Mammary epithelial cell (primary cell): ENCODE measurements at regions of chr2 and their contacts with region 1.

Region 1: GRCh38 chr2:232927793-232928550 is 57.9 kb downstream of the SNORC start:
- DNase-seq: no peak
- H3K4me3 ChIP-seq: no peak overlapping the region
- H3K27ac ChIP-seq: no peak overlapping the region
- H3K4me1 ChIP-seq: peaks cover 7% of the 10 kb centered on the region
- H3K27me3 ChIP-seq: peaks cover 30% of the 10 kb centered on the region
- CTCF ChIP-seq: no peak

Region 2: GRCh38 chr2:232816657-232817056 is 111.3 kb before region 1 on chr2:
- CTCF ChIA-PET with region 1: no interaction called
- dilution Hi-C with region 1: loop called (anchors 5 kb)
- in situ Hi-C with region 1: no loop called
- intact Hi-C with region 1: no loop called
- DNase-seq: no peak
- H3K4me3 ChIP-seq: no peak overlapping the region
- H3K27ac ChIP-seq: no peak overlapping the region
- H3K4me1 ChIP-seq: no peaks in the 10 kb centered on the region
- H3K27me3 ChIP-seq: no peaks in the 10 kb centered on the region
- CTCF ChIP-seq: no peak

Region 3: GRCh38 chr2:232884549-232885263 is 43.3 kb before region 1 on chr2:
- CTCF ChIA-PET with region 1: no interaction called
- dilution Hi-C with region 1: loop called (anchors 5 kb)
- in situ Hi-C with region 1: no loop called
- intact Hi-C with region 1: no loop called
- DNase-seq: no peak
- H3K4me3 ChIP-seq: no peak overlapping the region
- H3K27ac ChIP-seq: no peak overlapping the region
- H3K4me1 ChIP-seq: no peaks in the 10 kb centered on the region
- H3K27me3 ChIP-seq: no peaks in the 10 kb centered on the region
- CTCF ChIP-seq: no peak

Region 4: DNA sequence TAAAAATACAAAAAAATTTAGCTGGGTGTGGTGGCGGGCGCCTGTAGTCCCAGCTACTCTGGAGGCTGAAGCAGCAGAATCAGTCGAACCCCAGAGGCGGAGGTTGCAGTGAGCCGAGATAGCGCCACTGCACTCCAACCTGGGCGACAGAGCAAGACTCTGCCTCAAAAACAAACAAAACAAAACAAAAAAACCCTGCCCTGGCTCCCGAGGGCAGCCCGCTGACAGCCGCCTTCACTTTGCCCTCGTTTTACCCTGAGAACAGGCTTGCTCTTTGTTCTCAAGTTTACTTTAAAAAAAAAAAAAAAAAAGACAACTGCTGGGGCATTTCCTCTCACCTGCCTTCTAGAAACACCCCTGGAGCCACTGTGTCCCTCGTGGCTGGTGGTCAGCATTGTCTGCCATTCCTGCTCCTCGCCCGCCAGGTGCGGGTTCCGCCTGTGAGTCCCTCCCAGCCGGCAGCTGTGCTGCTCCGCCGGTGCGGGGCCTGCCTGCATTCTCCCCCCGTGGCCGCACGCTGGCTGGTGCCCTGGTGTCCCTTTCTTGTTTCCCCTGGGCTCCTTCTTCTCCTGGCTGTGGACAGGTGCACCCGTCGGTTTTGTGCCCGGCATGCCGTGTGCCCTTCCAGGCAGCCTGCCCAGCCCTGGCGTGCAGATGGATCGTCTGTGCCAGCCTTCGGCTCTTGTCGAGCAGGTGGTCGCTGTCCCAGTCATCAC is 532.9 kb after region 1 on chr2:
- CTCF ChIA-PET with region 1: no interaction called
- dilution Hi-C with region 1: no loop called
- in situ Hi-C with region 1: no loop called
- intact Hi-C with region 1: no loop called
- DNase-seq: no peak
- H3K4me3 ChIP-seq: no peak overlapping the region
- H3K27ac ChIP-seq: no peak overlapping the region
- H3K4me1 ChIP-seq: no peaks in the 10 kb centered on the region
- H3K27me3 ChIP-seq: no peaks in the 10 kb centered on the region
- CTCF ChIP-seq: no peak